ENCODE measurements at regions of chr2 and their contacts with region 1.

Region 1: GRCh38 chr2:170815746-170816503 is 762 bp upstream of the GAD1 start:
- DNase-seq: peak; percentile 48 to 54
- ATAC-seq: peak in 7 of 8 donors; percentile 51 to 79 (median 62)
- H3K4me3 ChIP-seq: peak overlapping the region in 9 of 10 donors; percentile 24 to 56 (median 45)
- H3K27ac ChIP-seq: no peak overlapping the region
- H3K4me1 ChIP-seq: peaks cover 26 to 74% (median 54%) of the 10 kb centered on the region in 9 donors
- H3K27me3 ChIP-seq: peaks cover 54 to 91% (median 83%) of the 10 kb centered on the region in 7 donors
- CTCF ChIP-seq: peak; percentile 59 to 77 (median 75)

Region 2: DNA sequence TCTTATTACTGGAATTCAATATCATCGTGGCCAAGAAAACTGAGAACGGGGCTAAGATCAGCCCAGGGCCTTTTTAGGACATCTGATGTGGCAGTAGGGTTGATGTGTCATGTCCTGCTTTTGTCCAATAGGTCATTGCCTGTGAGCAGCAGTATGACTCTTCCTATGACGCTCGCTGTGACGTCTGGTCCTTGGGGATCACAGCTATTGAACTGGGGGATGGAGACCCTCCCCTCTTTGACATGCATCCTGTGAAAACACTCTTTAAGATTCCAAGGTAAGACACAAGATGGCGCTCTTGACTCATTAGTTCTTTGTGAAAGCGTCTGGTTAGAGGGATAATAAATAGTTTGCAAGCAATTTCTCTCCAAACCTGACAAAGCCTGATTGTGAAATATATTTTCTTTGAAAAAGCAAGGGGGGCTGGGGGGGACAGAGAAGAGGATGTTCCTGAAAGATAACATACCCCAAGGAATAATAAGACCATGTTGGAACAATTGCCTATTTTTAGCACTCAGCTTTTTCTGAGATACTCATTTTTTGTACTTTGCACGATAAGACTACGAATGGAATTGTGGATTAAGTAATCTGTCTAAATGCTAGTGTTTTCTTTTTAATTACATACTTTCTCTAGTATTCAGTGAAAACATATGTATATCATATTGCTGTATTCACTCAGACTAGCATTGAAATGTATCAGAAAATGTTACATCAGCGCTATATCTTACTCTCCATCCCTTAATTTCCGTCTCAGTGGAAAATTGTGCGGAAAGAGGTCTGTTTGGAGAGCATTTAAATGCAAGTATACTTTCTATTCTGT is 579.9 kb before region 1 on chr2:
- intact Hi-C with region 1: loop called in 7 of 10 experiments (anchors 5 to 10 kb)
- DNase-seq: peak in 1 of 2 donors; percentile 24
- ATAC-seq: peak in 3 of 8 donors; percentile 9 to 29 (median 14)
- H3K4me3 ChIP-seq: no peak overlapping the region
- H3K27ac ChIP-seq: no peak overlapping the region
- H3K4me1 ChIP-seq: no peaks in the 10 kb centered on the region
- H3K27me3 ChIP-seq: peaks cover 0 to 27% (median 12%) of the 10 kb centered on the region in 7 donors
- CTCF ChIP-seq: peak in 8 of 9 donors; percentile 16 to 57 (median 48)

Region 3: GRCh38 chr2:170369894-170370293 is 446.0 kb before region 1 on chr2:
- intact Hi-C with region 1: loop called in 6 of 10 experiments (anchors 5 to 10 kb)
- DNase-seq: no peak
- ATAC-seq: no peak
- H3K4me3 ChIP-seq: no peak overlapping the region
- H3K27ac ChIP-seq: no peak overlapping the region
- H3K4me1 ChIP-seq: no peaks in the 10 kb centered on the region
- H3K27me3 ChIP-seq: peaks cover 0 to 87% (median 79%) of the 10 kb centered on the region in 7 donors
- CTCF ChIP-seq: peak in 7 of 9 donors; percentile 14 to 48 (median 42)

Region 4: GRCh38 chr2:170409164-170409535 is 406.8 kb before region 1 on chr2:
- intact Hi-C with region 1: loop called in 7 of 10 experiments (anchors 2 to 5 kb)
- DNase-seq: peak; percentile 39 to 73
- ATAC-seq: peak in 1 of 8 donors; percentile 33
- H3K4me3 ChIP-seq: peak overlapping the region in 2 of 10 donors; percentile 15 to 20
- H3K27ac ChIP-seq: no peak overlapping the region
- H3K4me1 ChIP-seq: peaks cover 0 to 10% (median 7%) of the 10 kb centered on the region in 9 donors
- H3K27me3 ChIP-seq: peaks cover 0 to 46% (median 37%) of the 10 kb centered on the region in 7 donors
- CTCF ChIP-seq: peak; percentile 81 to 93 (median 88)

Region 5: DNA sequence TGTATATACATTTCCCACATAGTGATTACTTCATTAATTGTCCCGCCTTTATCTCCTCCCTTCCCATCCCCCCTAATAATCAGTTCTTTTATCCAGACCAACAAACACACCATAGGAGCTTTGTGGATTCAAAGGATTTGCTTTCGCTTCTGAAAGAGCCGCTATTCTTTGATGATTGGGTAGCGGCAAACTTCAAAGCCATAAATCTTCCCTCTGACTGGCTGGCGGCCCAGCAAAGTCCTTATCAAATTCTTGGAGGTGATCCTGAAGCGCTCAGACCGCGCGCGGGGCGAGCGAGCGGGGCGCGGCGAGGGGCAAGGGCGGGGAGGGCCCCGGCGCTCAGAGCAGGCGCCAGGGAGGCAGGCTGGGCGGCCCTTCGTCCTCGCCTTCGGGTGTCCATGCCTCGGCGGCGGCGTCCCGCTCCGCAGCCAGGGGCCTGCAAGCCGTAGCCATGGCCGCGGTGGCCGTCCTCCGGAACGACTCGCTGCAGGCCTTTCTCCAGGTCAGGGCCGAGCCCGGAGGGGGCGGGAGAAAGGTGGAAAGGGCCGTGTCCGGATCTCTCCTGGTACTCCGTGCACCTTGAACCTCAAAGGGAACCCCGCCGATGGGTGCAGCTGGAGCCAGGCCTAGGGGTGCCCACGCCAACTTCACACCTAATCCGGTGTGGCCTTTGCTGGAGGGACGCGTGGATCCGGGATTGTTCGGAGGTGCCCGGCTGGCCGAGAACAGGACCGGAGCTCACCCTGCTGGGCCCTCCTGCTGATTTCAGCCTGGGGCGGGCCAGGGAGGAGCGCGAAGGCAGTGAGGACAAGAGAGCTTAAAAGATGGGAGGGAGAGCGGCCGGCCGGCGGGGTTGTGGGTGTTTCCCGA is 100.6 kb before region 1 on chr2 and contains the start of gene SP5:
- intact Hi-C with region 1: loop called in 1 of 10 experiments (anchors 10 kb)
- DNase-seq: peak; percentile 25 to 31
- ATAC-seq: peak; percentile 44 to 67 (median 58)
- H3K4me3 ChIP-seq: peak within 1 kb of the TSS; percentile 27 to 63 (median 56)
- H3K27ac ChIP-seq: peak within 1 kb of the TSS in 6 of 10 donors; percentile 21 to 65 (median 52)
- H3K4me1 ChIP-seq: peaks cover 12 to 50% (median 36%) of the 10 kb centered on the region in 9 donors
- H3K27me3 ChIP-seq: peaks cover 41 to 100% (median 99%) of the 10 kb centered on the region in 7 donors
- CTCF ChIP-seq: no peak
- total RNA-seq, gene SP5: 0.15 to 0.97 (median 0.45) TPM in 8 of 10 donors, not detected in the others